CD4-positive, alpha-beta memory T cell (primary cell): ENCODE measurements at regions of chr11 and their contacts with region 1.

Region 1: DNA sequence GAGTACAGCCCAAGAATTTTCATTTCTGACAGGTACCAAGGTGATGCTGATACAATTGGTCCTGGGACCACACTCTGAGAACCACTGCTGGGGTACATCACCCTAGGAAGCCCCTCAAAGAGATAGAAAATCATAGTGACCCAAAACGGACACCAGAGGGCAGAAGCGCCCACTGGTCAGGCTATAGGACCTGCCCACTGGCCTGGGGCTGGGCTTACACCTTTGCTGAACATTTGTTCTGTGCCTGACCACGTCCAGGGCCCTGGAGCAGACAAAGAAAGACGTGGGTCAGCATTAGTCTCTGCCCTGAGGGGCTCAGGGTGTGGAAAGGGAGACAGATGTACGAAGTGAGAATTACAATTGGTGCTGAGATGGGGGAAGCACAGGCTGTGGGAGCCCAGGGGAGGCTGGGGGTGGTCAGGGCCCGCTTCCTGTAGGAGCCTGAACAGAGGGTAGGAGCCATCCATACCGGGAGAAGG is 14.4 kb upstream of the SERPINH1 start:
- DNase-seq: no peak
- H3K4me3 ChIP-seq: no peak overlapping the region
- H3K4me3 Mint-ChIP-seq: no peak overlapping the region
- H3K27ac ChIP-seq: no peak overlapping the region
- H3K27ac Mint-ChIP-seq: no peak overlapping the region
- H3K4me1 ChIP-seq: no peaks in the 10 kb centered on the region
- H3K4me1 Mint-ChIP-seq: peaks cover 0 to 3% (median 0%) of the 10 kb centered on the region in 4 donors
- H3K27me3 ChIP-seq: no peaks in the 10 kb centered on the region
- H3K27me3 Mint-ChIP-seq: peaks cover 0 to 3% of the 10 kb centered on the region in 2 donors

Region 2: GRCh38 chr11:75413864-75414263 is 133.8 kb before region 1 on chr11:
- CTCF ChIA-PET with region 1: no interaction called
- POLR2A ChIA-PET with region 1: no interaction called
- intact Hi-C with region 1: no loop called
- DNase-seq: no peak
- H3K4me3 ChIP-seq: no peak overlapping the region
- H3K4me3 Mint-ChIP-seq: no peak overlapping the region
- H3K27ac ChIP-seq: no peak overlapping the region
- H3K27ac Mint-ChIP-seq: no peak overlapping the region
- H3K4me1 ChIP-seq: no peaks in the 10 kb centered on the region
- H3K4me1 Mint-ChIP-seq: peaks cover 0 to 4% (median 2%) of the 10 kb centered on the region in 4 donors
- H3K27me3 ChIP-seq: no peaks in the 10 kb centered on the region
- H3K27me3 Mint-ChIP-seq: no peaks in the 10 kb centered on the region

Region 3: DNA sequence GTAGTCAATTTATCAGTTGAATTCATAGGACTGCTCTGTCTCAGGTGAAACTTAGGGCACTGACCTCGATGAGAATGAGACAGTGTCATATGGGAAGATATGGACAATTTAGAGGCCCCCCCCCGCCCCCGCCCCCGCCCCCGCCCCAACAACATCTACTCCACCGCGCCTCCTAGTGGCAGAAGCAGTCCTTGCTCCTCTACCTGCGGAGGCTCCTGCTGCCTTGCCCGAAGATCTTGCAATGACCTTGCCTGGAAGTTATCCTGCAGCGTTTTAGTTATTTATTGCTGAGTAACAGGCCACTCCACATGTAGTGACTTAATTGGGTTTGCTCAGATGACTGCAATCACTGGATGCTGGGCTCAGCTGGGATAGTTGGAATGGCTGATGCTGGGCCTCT is 29.6 kb after region 1 on chr11:
- CTCF ChIA-PET with region 1: interaction called, 8 read pairs
- POLR2A ChIA-PET with region 1: no interaction called
- intact Hi-C with region 1: loop called (anchors 1 kb)
- DNase-seq: peak; percentile 37 to 60 (median 48)
- H3K4me3 ChIP-seq: no peak overlapping the region
- H3K4me3 Mint-ChIP-seq: no peak overlapping the region
- H3K27ac ChIP-seq: no peak overlapping the region
- H3K27ac Mint-ChIP-seq: no peak overlapping the region
- H3K4me1 ChIP-seq: peaks cover 2% of the 10 kb centered on the region
- H3K4me1 Mint-ChIP-seq: peaks cover 2 to 4% (median 2%) of the 10 kb centered on the region in 4 donors
- H3K27me3 ChIP-seq: no peaks in the 10 kb centered on the region
- H3K27me3 Mint-ChIP-seq: peaks cover 0 to 2% of the 10 kb centered on the region in 2 donors

Region 4: GRCh38 chr11:75592715-75593114 is 45.1 kb after region 1 on chr11:
- CTCF ChIA-PET with region 1: interaction called, 4 read pairs
- POLR2A ChIA-PET with region 1: no interaction called
- intact Hi-C with region 1: loop called (anchors 1 kb)
- DNase-seq: no peak
- H3K4me3 ChIP-seq: no peak overlapping the region
- H3K4me3 Mint-ChIP-seq: peak overlapping the region in 1 of 8 donors; percentile 42
- H3K27ac ChIP-seq: no peak overlapping the region
- H3K27ac Mint-ChIP-seq: peak overlapping the region in 2 of 7 donors; percentile 29 to 31
- H3K4me1 ChIP-seq: peaks cover 9% of the 10 kb centered on the region
- H3K4me1 Mint-ChIP-seq: peaks cover 9 to 15% (median 12%) of the 10 kb centered on the region in 4 donors
- H3K27me3 ChIP-seq: no peaks in the 10 kb centered on the region
- H3K27me3 Mint-ChIP-seq: peaks cover 0 to 1% of the 10 kb centered on the region in 2 donors